Right ventricle myocardium inferior (tissue), 1 donor: ENCODE measurements at regions of chr6 and their contacts with region 1.

Region 1: GRCh38 chr6:24064082-24064481 is 61.9 kb upstream of the NRSN1 start:
- DNase-seq: no peak
- ATAC-seq: no peak

Region 2: DNA sequence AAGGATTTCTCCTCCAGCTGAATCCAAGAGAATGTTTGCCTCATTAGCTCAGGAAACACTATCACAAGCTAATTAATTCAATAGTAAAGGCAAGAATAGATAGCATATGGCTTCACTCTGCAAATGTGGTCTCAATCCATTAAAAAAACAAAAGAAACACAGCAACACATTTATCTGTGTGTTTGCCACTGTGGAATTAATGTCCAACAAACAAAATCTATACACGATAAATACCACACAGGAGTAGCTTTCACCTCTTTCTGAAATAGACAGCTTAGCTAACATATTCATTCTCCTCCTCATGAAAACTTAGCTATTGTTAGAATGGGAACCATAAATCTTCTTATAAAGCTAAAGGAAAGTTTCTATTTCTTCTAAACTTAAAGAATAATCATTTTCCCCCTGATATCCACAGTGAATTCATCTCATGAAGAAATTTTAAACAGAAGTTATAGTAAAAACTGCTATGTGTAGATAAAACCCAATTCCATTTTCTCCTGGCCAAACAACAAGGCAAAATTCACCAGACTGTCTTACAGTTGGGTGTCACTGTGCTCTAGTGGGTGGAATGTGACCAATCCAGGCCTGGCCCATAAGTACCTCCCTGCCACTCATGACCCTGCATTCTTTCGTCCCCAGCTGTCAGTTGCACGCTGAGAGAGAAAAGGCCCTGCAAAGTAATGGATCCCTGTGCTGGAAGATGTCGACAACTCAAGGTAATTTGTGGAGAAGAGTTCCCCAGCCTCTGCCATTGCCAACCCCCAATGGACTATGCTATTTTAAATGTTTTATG is 31.0 kb before region 1 on chr6:
- intact Hi-C with region 1: no loop called
- DNase-seq: no peak
- ATAC-seq: no peak

Region 3: GRCh38 chr6:24205020-24205492 is 141.0 kb after region 1 on chr6:
- intact Hi-C with region 1: loop called (anchors 10 kb)
- DNase-seq: no peak
- ATAC-seq: no peak